Head of caudate nucleus (tissue), 42 donors: ENCODE measurements at regions of chr15 and their contacts with region 1.

Region 1: DNA sequence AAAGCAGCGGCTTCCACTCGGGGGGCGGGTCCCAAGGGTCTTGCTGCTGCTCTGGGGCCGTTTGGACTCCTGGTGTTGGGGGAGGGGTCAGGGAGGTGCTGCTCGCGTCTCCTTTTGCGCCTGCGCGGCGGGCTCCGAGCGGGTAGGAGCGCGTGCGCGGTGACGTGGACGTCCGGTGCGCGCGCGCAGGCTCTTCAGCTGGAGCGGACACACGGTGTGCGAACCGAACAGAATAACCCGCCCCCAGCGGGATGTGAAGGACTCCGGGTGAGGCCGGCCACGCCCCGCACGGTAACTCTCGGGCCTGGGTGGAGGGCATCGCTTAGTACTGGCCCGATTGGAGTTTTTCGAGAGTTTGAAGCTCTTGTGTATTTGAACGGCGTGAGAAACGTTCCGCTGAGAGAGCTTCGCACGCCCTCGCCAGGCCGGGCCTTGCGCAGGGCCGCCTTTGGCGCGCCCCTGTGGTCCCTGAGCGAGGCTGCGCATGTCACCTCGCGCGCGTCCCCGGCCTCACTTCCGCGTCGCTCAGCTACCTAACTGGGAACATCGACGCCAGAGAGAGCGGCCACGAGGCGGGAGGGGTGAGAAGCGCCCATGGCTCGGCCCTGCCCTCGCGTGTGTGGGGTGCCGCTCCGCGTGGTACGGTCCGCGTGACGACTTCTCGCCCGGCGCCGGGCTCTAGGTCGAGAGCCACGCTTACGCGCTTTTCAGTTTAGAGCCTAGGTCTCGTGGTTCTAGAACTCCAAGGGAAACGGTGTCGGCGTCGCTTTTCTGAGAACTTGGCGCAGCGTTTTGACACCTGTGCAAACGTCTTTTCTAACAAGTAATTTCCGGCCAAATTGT is at the start of gene MGA:
- DNase-seq: peak; percentile 53 to 91 (median 82)

Region 2: DNA sequence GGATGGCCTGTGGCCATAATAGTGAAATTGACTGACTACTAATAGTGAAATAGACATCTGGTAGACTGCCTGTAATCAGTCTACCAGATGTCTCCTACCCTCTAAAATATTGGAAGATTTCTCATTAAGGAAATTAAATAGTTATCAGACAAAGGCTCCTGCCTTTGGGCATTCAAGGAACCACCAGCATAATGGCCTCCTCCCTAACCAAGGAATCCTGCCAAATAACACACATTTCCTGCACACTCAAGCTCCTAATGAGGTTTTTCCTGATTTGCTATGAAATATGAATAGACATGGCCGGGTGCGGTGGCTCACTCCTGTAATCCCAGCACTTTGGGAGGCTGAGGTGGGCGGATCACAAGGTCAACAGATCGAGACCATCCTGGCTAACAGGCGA is 313.2 kb before region 1 on chr15:
- intact Hi-C with region 1: no loop called
- DNase-seq: no peak

Region 3: GRCh38 chr15:41621200-41622193 is 39.0 kb before region 1 on chr15:
- intact Hi-C with region 1: loop called (anchors 5 kb)
- DNase-seq: peak; percentile 75 to 95 (median 89)

Region 4: GRCh38 chr15:41648770-41649169 is 11.7 kb before region 1 on chr15:
- intact Hi-C with region 1: no loop called
- DNase-seq: no peak